ENCODE measurements at regions of chrX and their contacts with region 1.

Region 1: DNA sequence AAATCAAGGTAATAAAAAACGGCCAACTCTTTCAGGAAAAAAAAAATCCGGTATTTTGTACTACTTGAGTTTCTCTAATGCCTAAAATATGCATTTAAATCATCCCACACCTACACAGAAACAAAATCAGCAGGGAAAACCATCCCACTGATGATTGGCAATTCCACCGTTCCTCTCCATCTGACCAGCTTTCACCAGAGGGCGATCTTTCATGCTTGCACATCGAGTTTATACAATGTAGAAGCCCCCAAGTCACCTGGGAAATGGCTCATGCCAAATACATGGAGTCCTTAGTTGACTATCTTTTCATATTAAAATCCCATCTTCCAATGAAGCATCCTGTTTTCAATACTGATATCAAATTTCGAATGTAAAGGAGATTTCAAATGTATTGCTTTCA is 69.2 kb downstream of the PTCHD1 start:
- DNase-seq: no peak
- H3K4me3 Mint-ChIP-seq: no peak overlapping the region
- H3K27ac Mint-ChIP-seq: no peak overlapping the region
- H3K4me1 Mint-ChIP-seq: no peaks in the 10 kb centered on the region
- H3K27me3 Mint-ChIP-seq: no peaks in the 10 kb centered on the region

Region 2: GRCh38 chrX:23287191-23287725 is 116.6 kb before region 1 on chrX:
- intact Hi-C with region 1: no loop called
- DNase-seq: no peak
- H3K4me3 Mint-ChIP-seq: no peak overlapping the region
- H3K27ac Mint-ChIP-seq: no peak overlapping the region
- H3K4me1 Mint-ChIP-seq: no peaks in the 10 kb centered on the region
- H3K27me3 Mint-ChIP-seq: no peaks in the 10 kb centered on the region

Region 3: DNA sequence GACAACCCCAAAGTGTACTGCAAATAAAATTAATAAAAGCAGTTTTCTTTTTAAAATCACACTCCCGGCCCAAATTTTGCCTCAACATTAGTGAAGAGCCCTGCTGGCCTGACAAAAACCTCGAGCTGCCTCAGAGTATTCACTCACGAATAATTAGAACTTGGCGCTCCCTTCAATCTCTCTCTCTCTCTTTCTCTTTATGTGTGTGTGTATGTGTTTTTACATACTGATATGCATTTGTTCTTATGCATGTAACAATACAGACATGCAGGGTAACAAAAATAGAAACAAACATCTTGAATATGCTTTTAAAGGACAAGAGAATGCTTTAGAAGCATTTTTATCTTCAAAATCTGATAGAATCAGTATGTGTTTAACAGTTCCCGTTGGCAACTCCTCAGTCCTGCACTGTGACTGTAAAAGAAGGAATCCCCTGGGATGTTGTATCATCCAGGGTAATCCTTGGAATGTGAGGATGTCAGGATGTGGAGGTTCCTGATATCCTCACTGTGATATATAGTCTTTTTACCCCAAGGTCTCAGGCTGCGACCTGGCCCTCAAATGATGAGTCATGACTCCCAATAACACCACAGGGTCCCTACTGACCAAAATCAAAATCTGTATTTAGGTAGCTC is 16.2 kb before region 1 on chrX:
- intact Hi-C with region 1: loop called (anchors 1 kb)
- DNase-seq: no peak
- H3K4me3 Mint-ChIP-seq: no peak overlapping the region
- H3K27ac Mint-ChIP-seq: no peak overlapping the region
- H3K4me1 Mint-ChIP-seq: no peaks in the 10 kb centered on the region
- H3K27me3 Mint-ChIP-seq: no peaks in the 10 kb centered on the region